ENCODE measurements at regions of chr2 and their contacts with region 1.

Region 1: DNA sequence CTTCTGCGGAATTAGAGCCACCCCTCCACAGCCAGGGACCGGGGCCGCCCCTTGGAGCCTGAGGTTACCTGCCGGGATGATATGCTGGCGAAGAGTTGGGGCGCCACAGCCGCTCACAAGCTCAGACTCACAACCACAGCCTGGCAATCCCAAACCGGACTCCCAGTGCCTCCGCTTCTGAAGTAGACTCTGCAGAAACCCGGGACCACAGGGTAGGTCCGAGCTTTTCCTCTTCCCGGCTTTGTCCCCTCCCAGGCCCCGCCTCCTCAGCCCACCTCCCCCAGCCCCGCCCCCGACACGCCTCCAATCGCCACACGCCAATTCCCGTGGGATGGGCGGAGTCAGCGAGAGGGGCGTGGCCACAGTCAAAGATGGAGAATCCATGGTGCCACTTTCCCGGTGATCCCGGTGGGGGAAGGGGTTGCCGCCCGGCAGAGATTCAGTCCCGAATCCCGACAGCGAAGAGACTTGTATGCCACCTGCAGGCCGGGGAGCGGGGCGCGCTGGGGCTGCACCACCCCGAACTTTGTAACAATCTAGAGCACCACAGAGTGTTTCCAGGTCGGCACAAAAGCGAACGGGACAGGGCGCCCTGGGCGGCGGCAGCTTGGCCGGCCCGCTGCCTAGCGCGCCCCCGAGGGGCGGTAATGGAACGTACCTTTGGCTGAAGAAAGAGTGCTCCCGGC is at the start of gene IDH1:
- DNase-seq: peak; percentile 99
- H3K4me3 ChIP-seq: peak within 1 kb of the TSS; percentile 47 to 93 (median 80)
- H3K27ac ChIP-seq: peak within 1 kb of the TSS; percentile 85 to 92 (median 90)
- H3K4me1 ChIP-seq: peaks cover 0 to 48% (median 26%) of the 10 kb centered on the region in 4 donors
- H3K27me3 ChIP-seq: no peaks in the 10 kb centered on the region
- CTCF ChIP-seq: peak in 4 of 5 experiments; percentile 34 to 63 (median 49)
- EP300 ChIP-seq: no peak
- POLR2A ChIP-seq: peak; percentile 52
- total RNA-seq, gene IDH1: 47.9 to 164 (median 136) TPM

Region 2: DNA sequence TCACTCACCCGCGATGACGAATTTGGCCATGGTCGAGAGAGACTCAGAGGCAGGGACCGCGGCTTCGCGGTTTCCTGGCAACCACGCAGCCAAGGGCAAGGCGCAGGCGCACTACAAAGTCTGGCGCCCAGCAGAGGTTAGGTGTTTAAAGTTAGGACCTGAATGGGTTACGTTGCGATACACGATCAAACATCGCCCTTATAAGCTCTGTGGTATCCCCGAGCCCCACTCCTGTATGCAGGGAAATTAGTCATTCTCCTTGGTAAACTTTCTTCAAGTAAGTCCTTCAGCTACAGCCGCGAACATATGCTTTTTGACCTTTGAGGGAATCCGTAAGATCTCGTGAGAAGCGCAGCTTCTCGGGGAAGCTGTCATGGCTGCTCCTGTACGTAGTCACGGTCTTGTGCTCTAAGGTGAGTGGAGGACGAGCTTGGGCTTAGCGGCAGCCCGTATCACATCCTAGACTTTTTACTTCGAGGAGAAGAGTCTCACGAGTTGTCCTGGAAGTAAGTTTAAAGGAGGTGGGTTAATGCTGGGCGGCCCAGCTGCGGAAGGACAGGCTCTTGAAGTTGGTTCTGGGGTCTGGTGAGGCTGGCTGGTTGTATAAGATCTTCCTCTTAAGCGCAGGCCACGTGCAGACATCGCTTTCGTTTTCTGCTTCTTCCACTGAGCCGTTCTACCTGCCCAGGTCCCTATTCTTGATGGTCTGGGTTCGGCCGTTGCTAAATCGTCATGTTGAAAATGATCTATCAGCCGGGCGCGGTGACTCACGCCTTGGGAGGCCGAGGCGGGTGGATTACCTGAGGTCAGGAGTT is 1489.6 kb before region 1 on chr2 and contains the starts of genes FASTKD2 and MDH1B:
- in situ Hi-C with region 1: loop called in 1 of 4 experiments (anchors 25 kb)
- intact Hi-C with region 1: no loop called
- DNase-seq: peak; percentile 87
- H3K4me3 ChIP-seq: peak within 1 kb of the TSS; percentile 54 to 90 (median 78)
- H3K27ac ChIP-seq: peak within 1 kb of the TSS; percentile 81 to 91 (median 86)
- H3K4me1 ChIP-seq: peaks cover 0 to 39% (median 15%) of the 10 kb centered on the region in 4 donors
- H3K27me3 ChIP-seq: no peaks in the 10 kb centered on the region
- CTCF ChIP-seq: no peak
- EP300 ChIP-seq: no peak
- POLR2A ChIP-seq: peak; percentile 66
- total RNA-seq, gene FASTKD2: 6.8 to 24.9 (median 21.1) TPM
- total RNA-seq, gene MDH1B: 0.55 to 365 (median 0.79) TPM in 3 of 4 donors, not detected in the other

Region 3: GRCh38 chr2:207143215-207144172 is 1111.5 kb before region 1 on chr2:
- in situ Hi-C with region 1: no loop called
- intact Hi-C with region 1: loop called (anchors 5 kb)
- DNase-seq: peak; percentile 61
- H3K4me3 ChIP-seq: peak overlapping the region in 1 of 4 donors; percentile 22
- H3K27ac ChIP-seq: peak overlapping the region; percentile 74 to 90 (median 86)
- H3K4me1 ChIP-seq: peaks cover 18 to 45% (median 25%) of the 10 kb centered on the region in 4 donors
- H3K27me3 ChIP-seq: no peaks in the 10 kb centered on the region
- CTCF ChIP-seq: no peak
- EP300 ChIP-seq: no peak
- POLR2A ChIP-seq: peak; percentile 39

Region 4: DNA sequence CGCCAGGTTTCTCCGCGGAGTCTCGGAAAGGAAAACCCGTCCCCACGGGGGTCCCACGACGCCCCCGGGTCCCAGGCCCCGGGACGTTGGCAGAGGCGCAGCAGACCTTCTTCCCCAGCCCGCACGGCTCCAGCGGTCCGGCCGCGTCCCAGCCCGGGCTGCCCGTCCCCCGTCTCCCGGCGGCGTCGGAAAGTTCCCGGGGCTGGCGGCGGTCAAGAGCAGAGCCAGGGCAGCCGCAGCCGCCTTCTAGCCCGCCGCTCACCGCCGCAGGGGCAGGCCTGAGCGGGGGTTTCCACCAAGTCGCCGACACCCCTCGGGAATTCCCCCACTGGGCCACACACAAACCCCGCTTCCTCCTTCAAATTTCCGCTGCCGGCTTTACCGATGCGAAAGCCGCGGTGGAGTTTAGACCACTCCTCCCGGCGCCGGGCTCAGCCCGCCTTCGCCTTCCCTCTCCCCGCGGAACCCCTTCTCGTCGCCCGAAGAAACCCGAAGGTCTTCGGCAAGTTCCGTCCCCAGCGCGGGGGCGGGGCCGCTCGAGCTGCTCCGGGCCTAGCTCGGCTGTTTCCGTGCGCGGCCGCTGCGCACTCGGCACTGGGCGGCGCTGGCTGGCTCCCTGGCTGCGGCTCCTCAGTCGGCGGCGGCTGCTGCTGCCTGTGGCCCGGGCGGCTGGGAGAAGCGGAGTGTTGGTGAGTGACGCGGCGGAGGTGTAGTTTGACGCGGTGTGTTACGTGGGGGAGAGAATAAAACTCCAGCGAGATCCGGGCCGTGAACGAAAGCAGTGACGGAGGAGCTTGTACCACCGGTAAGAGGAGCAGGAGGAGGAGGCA is 725.5 kb before region 1 on chr2 and contains the start of gene CREB1:
- in situ Hi-C with region 1: loop called in 1 of 4 experiments (anchors 25 kb)
- intact Hi-C with region 1: no loop called
- DNase-seq: peak; percentile 99
- H3K4me3 ChIP-seq: peak within 1 kb of the TSS; percentile 63 to 90 (median 83)
- H3K27ac ChIP-seq: peak within 1 kb of the TSS; percentile 97 to 99 (median 98)
- H3K4me1 ChIP-seq: peaks cover 24 to 50% (median 37%) of the 10 kb centered on the region in 4 donors
- H3K27me3 ChIP-seq: no peaks in the 10 kb centered on the region
- CTCF ChIP-seq: no peak
- EP300 ChIP-seq: peak; percentile 79
- POLR2A ChIP-seq: peak; percentile 99
- total RNA-seq, gene CREB1: 41.9 to 56.1 (median 51.9) TPM

Region 5: DNA sequence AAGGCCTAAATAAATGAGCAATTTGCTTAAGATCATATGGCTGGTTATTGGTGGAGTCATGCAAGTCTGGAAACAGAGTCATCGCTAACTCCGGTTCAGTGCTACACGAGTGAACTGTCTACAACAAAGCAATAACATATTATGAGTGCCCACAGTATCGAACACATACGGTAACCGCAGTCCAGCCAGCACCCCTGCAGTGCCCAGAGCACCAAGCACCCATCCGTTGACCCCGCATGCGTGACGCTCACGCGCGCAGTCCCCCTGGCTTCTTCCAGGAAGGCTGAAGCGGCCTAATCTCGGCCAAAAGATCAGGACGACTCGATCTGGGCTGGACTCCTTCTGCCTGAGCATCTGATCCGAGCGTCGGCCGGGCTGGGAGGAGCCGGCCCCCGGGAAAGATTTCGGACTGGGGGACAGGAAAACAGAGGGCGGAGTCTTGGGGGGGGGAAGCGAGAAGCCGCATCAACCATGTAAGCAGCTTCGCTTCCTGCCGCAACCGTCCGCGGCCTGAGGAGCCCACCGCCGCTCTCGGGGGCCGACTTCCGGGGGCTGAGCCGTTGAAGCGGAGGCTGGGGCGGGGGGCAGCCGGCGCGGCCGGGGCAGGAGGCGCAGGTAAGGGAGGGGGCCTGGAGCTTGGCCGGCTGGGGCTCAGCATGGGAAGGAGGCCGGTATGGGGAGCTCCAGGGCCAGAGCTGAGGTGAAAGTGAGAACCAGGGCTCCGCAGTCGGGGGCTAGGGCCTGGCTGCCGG is 11.0 kb after region 1 on chr2 and contains the start of gene PIKFYVE:
- in situ Hi-C with region 1: no loop called
- intact Hi-C with region 1: loop called (anchors 1 kb)
- DNase-seq: peak; percentile 95
- H3K4me3 ChIP-seq: peak within 1 kb of the TSS; percentile 80 to 97 (median 92)
- H3K27ac ChIP-seq: peak within 1 kb of the TSS; percentile 94 to 99 (median 98)
- H3K4me1 ChIP-seq: peaks cover 11 to 36% (median 17%) of the 10 kb centered on the region in 4 donors
- H3K27me3 ChIP-seq: no peaks in the 10 kb centered on the region
- CTCF ChIP-seq: no peak
- EP300 ChIP-seq: no peak
- POLR2A ChIP-seq: peak; percentile 81
- total RNA-seq, gene PIKFYVE: 11.9 to 35.6 (median 18.0) TPM

Region 6: DNA sequence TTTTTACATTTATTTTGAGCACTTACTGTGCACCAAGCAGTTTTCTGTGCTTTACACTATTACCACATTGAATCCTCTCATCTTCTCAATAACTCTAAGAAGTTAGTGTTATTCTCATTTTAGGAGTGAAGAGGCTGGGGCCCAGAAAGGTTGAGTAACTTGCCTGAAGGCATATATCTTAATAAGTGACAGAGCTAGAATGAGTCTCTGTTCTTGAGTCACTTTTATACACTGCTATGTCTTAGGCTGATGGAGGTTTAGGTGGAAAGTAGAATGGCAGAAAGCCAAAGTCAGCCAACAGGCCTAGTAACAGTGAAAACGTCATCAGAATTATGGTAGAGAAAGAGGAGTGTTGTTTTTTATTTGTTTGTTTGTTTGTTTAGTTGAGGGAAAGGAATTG is 1719.6 kb after region 1 on chr2:
- in situ Hi-C with region 1: no loop called
- intact Hi-C with region 1: no loop called
- DNase-seq: no peak
- H3K4me3 ChIP-seq: no peak overlapping the region
- H3K27ac ChIP-seq: no peak overlapping the region
- H3K4me1 ChIP-seq: no peaks in the 10 kb centered on the region
- H3K27me3 ChIP-seq: no peaks in the 10 kb centered on the region
- CTCF ChIP-seq: no peak
- EP300 ChIP-seq: no peak
- POLR2A ChIP-seq: no peak

Measured in transverse colon (tissue), 4 donors.